ENCODE measurements at regions of chr1 and their contacts with region 1.

Region 1: GRCh38 chr1:112674439-112674985 is at the start of gene MOV10:
- DNase-seq: peak; percentile 87
- ATAC-seq: peak; percentile 82
- total RNA-seq, gene MOV10: 10.4 TPM

Region 2: GRCh38 chr1:112418099-112418892 is 256.2 kb before region 1 on chr1:
- intact Hi-C with region 1: no loop called
- DNase-seq: no peak
- ATAC-seq: no peak

Region 3: GRCh38 chr1:112706908-112707663 is 32.6 kb after region 1 on chr1 and contains the start of gene RHOC:
- intact Hi-C with region 1: loop called (anchors 2 kb)
- DNase-seq: peak; percentile 92
- ATAC-seq: peak; percentile 90
- total RNA-seq, gene RHOC: 98.2 TPM

Measured in Right ventricle myocardium superior (tissue), 1 donor.